BJ (cell line): ENCODE measurements at regions of chr3 and their contacts with region 1.

Region 1: DNA sequence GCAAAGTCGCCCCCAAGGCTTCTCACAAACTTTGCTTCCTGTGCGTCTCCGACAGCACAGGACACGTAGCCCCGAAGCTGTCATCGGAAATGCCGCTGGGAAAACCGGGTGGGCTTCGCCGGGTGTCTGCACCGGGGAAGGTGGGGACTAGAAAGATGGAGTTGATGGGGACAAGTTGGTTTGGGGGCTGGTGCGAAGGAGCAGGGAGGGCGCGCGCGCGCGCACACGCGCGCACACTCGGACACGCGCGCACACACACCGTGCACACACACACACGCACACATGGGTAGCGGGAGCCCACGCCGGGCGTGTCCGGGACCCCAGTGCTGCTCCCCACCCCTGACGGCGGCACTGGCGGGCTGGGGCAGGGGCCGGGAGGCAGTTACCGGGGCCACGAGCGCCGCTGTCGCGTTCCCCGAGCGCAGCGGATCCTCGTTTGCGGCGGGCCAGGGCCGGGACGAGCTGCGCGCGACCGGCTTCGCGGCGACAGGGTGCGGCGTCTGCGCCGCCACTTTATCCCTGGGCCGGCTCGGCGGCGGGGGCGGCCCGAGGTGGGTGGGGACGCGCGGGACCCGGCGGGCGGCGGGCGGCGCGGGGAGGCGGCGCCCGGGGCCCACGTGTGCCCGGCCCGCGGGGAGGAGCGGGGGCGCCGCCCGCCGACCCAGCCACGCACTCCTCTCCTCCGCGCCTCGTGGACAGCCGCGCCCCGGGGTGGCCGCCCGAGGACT is 547 bp upstream of the MGLL start:
- DNase-seq: no peak
- H3K4me3 ChIP-seq: peak overlapping the region; percentile 92
- H3K27me3 ChIP-seq: no peaks in the 10 kb centered on the region
- CTCF ChIP-seq: no peak

Region 2: GRCh38 chr3:127779747-127780146 is 43.1 kb before region 1 on chr3:
- CTCF ChIA-PET with region 1: interaction called, 4 read pairs
- POLR2A ChIA-PET with region 1: interaction called, 23 read pairs
- DNase-seq: no peak
- H3K4me3 ChIP-seq: no peak overlapping the region
- H3K27me3 ChIP-seq: no peaks in the 10 kb centered on the region
- CTCF ChIP-seq: no peak